Activated T-helper 2 cell treated with anti-CD3 and anti-CD28 coated beads, Interferon-gamma antibody, Interleukin-2, Interleukin-4, amounts not matched to agents 10 μg/mL and 5 μg/mL and 100 μg/mL, durations not matched to agents 14 hours and 24 hours and 36 hours (primary cell): ENCODE measurements at regions of chr7 and their contacts with region 1.

Region 1: GRCh38 chr7:47254081-47255006 is 327.6 kb downstream of the TNS3 start:
- DNase-seq: peak; percentile 41
- H3K4me3 Mint-ChIP-seq: peak overlapping the region; percentile 68
- H3K27ac Mint-ChIP-seq: no peak overlapping the region
- H3K4me1 Mint-ChIP-seq: peaks cover 2% of the 10 kb centered on the region
- H3K27me3 Mint-ChIP-seq: peaks cover 18% of the 10 kb centered on the region

Region 2: DNA sequence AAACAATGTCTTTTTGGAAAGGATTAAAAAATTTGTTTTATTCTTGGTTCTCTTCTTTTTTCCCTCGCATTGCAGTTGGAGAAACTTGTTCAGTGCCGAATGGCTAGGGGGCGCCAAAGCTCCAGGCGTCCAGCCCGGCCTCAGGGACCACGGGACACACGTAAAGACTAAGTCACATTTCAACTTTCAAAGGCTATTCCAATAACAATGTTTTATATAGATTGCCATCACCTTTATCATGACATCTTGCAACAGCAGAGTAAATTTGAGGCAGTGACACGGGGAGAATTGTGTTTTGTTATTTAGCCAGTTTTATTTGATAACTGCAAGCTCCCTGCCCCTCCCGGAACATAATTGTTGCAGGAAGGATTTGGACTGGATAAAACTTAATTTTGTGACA is 1331.1 kb before region 1 on chr7:
- intact Hi-C with region 1: loop called (anchors 2 kb)
- DNase-seq: peak; percentile 28
- H3K4me3 Mint-ChIP-seq: no peak overlapping the region
- H3K27ac Mint-ChIP-seq: no peak overlapping the region
- H3K4me1 Mint-ChIP-seq: peaks cover 27% of the 10 kb centered on the region
- H3K27me3 Mint-ChIP-seq: peaks cover 57% of the 10 kb centered on the region

Region 3: GRCh38 chr7:47239931-47240421 is 14.4 kb before region 1 on chr7:
- intact Hi-C with region 1: no loop called
- DNase-seq: no peak
- H3K4me3 Mint-ChIP-seq: no peak overlapping the region
- H3K27ac Mint-ChIP-seq: no peak overlapping the region
- H3K4me1 Mint-ChIP-seq: no peaks in the 10 kb centered on the region
- H3K27me3 Mint-ChIP-seq: no peaks in the 10 kb centered on the region